OCI-LY7 (cell line): ENCODE measurements at regions of chr20 and their contacts with region 1.

Region 1: DNA sequence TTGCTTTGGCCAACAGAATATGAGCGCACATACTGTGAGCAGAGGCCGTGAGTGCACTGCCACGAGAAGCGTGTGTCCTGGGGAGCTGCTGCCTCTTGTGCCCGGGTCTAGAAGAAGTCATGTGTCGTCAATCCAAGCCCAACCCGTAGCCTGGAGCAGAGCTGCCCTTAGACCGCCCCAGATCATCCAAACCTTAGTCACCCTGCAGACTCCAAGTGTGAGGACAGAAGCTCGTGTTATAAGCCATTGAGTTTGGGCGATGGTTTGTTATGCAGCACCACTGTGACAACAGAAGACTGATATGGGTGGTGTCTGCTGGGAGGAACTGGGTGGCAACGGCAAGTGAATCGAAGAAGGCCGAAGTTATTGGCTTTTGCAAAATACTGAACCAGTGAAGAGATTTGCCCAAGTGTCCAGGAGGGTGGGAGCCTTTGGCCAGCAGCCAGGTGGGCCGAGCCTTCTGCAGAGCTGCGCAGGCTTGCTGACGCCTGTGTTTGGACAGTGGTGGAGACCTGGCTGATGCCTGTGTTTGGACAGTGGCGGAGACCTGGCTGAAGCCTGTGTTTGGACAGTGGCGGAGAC is 101.3 kb upstream of the SULF2 start:
- DNase-seq: no peak
- H3K4me3 ChIP-seq: no peak overlapping the region
- H3K27ac ChIP-seq: no peak overlapping the region
- H3K4me1 ChIP-seq: no peaks in the 10 kb centered on the region
- CTCF ChIP-seq: no peak

Region 2: GRCh38 chr20:47663333-47664067 is 223.1 kb before region 1 on chr20:
- CTCF ChIA-PET with region 1: no interaction called
- POLR2A ChIA-PET with region 1: no interaction called
- intact Hi-C with region 1: no loop called
- DNase-seq: peak; percentile 65
- H3K4me3 ChIP-seq: no peak overlapping the region
- H3K27ac ChIP-seq: no peak overlapping the region
- H3K4me1 ChIP-seq: no peaks in the 10 kb centered on the region
- CTCF ChIP-seq: peak; percentile 96

Region 3: DNA sequence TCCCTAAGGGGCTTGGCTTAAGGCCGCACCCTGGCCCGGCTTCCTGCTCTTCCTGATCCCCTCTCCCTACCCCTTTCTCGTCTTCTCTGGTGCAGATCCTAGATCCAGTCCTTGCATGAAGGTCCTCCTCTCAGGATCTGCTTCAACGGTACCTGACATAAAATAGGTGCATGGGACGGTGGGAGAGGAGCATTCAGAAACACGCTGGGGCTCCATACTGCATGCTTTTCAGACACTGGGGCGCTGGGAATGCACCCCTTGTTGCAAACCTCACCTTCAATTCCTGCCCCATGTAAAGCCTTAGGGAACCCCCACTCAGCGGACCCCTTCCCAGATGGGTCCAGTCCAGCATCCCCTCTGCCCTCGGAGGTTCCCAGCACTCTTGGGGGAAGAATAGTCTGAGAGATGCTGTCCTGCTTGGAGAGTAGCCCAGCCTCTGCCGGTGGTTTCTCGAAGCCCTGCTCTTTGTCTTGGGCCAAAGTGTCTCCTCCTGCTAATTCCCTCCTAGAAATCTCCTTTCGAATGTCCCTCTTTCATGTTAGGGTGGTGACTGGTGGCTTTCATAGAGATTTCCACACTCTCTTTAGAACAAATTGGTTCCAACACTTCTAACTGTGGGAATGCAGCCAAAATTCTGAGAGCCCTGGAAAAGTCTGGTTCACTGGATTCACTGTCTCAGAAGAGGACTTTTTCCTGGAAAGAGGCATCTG is 76.5 kb before region 1 on chr20:
- CTCF ChIA-PET with region 1: no interaction called
- POLR2A ChIA-PET with region 1: no interaction called
- intact Hi-C with region 1: loop called (anchors 10 kb)
- DNase-seq: no peak
- H3K4me3 ChIP-seq: no peak overlapping the region
- H3K27ac ChIP-seq: no peak overlapping the region
- H3K4me1 ChIP-seq: no peaks in the 10 kb centered on the region
- CTCF ChIP-seq: no peak

Region 4: GRCh38 chr20:48523212-48523941 is 636.8 kb after region 1 on chr20:
- CTCF ChIA-PET with region 1: no interaction called
- POLR2A ChIA-PET with region 1: no interaction called
- intact Hi-C with region 1: loop called (anchors 5 kb)
- DNase-seq: peak; percentile 56
- H3K4me3 ChIP-seq: no peak overlapping the region
- H3K27ac ChIP-seq: no peak overlapping the region
- H3K4me1 ChIP-seq: no peaks in the 10 kb centered on the region
- CTCF ChIP-seq: no peak